Gastrocnemius medialis (tissue), 4 donors: ENCODE measurements at regions of chr11 and their contacts with region 1.

Region 1: DNA sequence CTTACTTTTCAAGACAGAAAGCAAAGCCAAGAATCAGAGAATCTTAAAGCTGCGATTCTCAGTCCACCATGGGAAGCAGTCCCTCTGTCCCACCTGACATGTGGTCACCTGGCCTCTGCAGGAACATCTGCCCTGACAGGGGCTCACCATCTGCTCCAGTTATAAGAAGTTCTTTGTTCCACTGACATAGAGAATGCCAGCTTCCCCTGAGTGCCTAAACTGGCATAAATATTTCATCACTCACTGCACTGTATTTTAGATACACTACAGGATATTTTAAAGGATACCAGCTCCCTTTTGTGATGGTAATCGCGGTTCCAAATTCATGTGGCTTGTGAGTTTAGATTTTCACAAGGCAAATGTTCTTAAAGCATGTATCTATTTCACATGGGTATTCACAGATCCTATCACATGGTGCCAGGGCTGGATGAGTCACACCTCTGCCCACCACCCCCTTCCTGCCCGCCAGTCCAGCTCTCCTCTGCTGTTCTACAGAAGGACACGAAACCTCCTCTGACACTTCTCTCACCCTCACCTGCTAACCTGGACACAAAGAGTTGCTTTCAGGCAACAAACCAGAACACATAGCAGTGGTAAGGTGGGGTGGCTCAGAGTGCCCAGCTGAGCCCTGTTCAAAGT is 105.5 kb downstream of the KCNC1 start:
- DNase-seq: peak; percentile 70 to 84
- ATAC-seq: peak; percentile 52 to 55
- H3K4me3 ChIP-seq: no peak overlapping the region
- H3K27ac ChIP-seq: peak overlapping the region; percentile 91 to 97 (median 92)
- H3K4me1 ChIP-seq: peaks cover 36 to 46% of the 10 kb centered on the region in 2 donors
- H3K27me3 ChIP-seq: no peaks in the 10 kb centered on the region
- CTCF ChIP-seq: no peak
- POLR2A ChIP-seq: peak; percentile 19 to 52

Region 2: DNA sequence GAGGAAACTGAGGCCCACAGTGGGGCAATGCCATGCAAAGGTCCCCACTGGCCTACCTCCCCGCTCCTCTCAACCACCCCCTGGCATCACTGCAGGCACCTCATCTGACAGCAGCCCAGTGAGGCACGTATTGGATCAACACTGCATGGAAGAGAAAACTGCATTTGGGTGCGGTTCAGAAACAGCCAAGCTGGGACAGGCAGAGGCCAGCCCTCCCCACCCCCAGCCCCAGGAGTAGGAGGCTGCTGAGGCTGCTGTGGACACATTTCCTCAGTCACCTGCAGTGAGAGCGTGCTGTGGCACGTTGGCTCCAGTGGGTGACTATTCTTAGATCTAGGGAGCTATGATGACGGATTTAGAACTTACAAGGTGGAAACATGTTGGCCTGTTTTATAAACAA is 41.8 kb before region 1 on chr11:
- in situ Hi-C with region 1: no loop called
- intact Hi-C with region 1: loop called (anchors 1 kb)
- DNase-seq: peak; percentile 90 to 95
- ATAC-seq: peak; percentile 90 to 91
- H3K4me3 ChIP-seq: peak overlapping the region in 2 of 4 donors; percentile 12 to 35
- H3K27ac ChIP-seq: peak overlapping the region; percentile 90 to 96 (median 94)
- H3K4me1 ChIP-seq: peaks cover 50 to 52% of the 10 kb centered on the region in 2 donors
- H3K27me3 ChIP-seq: no peaks in the 10 kb centered on the region
- CTCF ChIP-seq: no peak
- POLR2A ChIP-seq: peak in 1 of 2 donors; percentile 35

Region 3: DNA sequence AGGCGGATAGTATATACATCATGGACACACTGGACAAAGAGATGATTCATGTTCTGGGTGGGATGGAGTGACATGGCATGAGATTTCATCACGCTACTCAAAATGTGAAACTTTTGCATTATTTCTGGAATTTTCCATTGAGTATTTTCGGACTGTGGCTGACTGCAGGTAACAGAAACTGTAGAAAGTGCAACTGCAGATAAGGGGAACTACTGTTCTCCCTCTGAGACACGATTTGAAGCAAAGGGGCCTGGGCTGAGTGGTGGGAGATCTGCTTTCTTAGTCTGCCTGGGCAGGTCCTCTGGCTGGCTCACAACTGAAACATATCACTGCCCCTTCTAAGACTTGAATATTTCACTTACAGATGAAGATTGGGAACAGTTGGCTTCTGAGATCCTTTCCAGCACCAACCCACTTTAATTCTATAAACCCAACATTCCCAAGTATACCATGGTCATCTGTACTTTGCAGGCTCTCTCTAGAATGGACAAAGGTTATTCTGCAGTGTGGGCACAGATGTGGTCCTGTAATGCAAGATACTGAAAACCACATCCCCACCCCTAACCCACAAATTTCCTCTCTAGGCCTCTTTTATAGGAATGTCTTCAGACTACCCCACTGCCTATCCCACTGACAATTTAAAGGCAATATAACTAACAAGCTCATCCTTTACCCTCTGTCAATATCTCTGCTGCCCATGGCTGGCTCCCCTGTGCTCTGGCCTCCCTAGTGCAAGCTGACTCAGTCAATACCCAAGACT is 15.6 kb after region 1 on chr11:
- in situ Hi-C with region 1: no loop called
- intact Hi-C with region 1: no loop called
- DNase-seq: no peak
- ATAC-seq: no peak
- H3K4me3 ChIP-seq: no peak overlapping the region
- H3K27ac ChIP-seq: no peak overlapping the region
- H3K4me1 ChIP-seq: peaks cover 17% of the 10 kb centered on the region in 2 donors
- H3K27me3 ChIP-seq: no peaks in the 10 kb centered on the region
- CTCF ChIP-seq: no peak
- POLR2A ChIP-seq: no peak